Activated CD4-positive, alpha-beta memory T cell treated with anti-CD3 and anti-CD28 coated beads for 36 hours (primary cell): ENCODE measurements at regions of chr12 and their contacts with region 1.

Region 1: DNA sequence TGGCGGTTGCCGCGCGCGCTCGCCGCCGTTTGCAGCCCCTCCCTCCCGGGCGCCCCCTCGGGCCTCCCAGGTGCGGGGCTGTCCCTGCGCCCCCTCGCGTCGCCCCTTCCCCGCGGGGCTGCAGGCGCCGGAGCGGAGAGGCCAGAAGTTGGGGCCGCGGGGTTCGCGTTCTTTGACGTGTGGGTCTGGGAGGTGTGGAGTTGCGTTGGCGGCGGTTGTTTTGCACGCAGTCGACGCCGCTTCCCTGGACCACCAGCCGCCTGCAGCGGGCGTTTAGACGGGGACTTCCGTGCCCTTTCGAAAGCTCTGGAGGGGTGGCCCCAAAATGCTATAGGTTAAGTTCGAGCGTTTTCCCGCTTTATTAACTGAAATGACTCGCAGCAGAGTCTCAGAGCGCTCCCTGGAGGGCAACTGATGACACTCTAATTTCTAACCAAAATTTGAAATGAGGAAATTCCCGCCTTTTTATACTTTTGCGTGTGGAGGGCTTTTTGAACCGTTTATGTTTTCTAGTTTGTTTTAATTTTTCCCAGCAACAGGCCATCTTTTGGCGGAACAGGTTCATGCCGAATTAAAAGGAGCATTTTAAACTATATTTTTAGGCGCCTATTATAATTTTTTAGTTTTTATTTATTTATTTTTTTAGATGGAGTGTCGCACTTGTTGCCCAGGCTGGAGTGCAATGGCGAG is 939 bp downstream of the TMPO start:
- DNase-seq: peak; percentile 94
- H3K4me3 Mint-ChIP-seq: peak overlapping the region; percentile 96
- H3K27ac Mint-ChIP-seq: peak overlapping the region; percentile 99
- H3K4me1 Mint-ChIP-seq: peaks cover 26% of the 10 kb centered on the region
- H3K27me3 Mint-ChIP-seq: peaks cover 1% of the 10 kb centered on the region

Region 2: GRCh38 chr12:96906849-96907670 is 1609.3 kb before region 1 on chr12 and contains the start of gene NEDD1:
- CTCF ChIA-PET with region 1: no interaction called
- POLR2A ChIA-PET with region 1: no interaction called
- intact Hi-C with region 1: loop called (anchors 5 kb)
- DNase-seq: peak; percentile 87
- H3K4me3 Mint-ChIP-seq: peak within 1 kb of the TSS; percentile 93
- H3K27ac Mint-ChIP-seq: peak within 1 kb of the TSS; percentile 96
- H3K4me1 Mint-ChIP-seq: peaks cover 39% of the 10 kb centered on the region
- H3K27me3 Mint-ChIP-seq: no peaks in the 10 kb centered on the region
- total RNA-seq, gene NEDD1: 55.4 to 57.9 TPM

Region 3: GRCh38 chr12:98424726-98425401 is 91.5 kb before region 1 on chr12:
- CTCF ChIA-PET with region 1: interaction called, 7 read pairs
- POLR2A ChIA-PET with region 1: no interaction called
- intact Hi-C with region 1: loop called (anchors 1 kb)
- DNase-seq: peak; percentile 74
- H3K4me3 Mint-ChIP-seq: no peak overlapping the region
- H3K27ac Mint-ChIP-seq: no peak overlapping the region
- H3K4me1 Mint-ChIP-seq: peaks cover 3% of the 10 kb centered on the region
- H3K27me3 Mint-ChIP-seq: no peaks in the 10 kb centered on the region

Region 4: GRCh38 chr12:98503592-98504367 is 12.5 kb before region 1 on chr12:
- CTCF ChIA-PET with region 1: interaction called, 9 read pairs
- POLR2A ChIA-PET with region 1: interaction called, 39 read pairs
- intact Hi-C with region 1: loop called (anchors 1 kb)
- DNase-seq: peak; percentile 97
- H3K4me3 Mint-ChIP-seq: peak overlapping the region; percentile 86
- H3K27ac Mint-ChIP-seq: peak overlapping the region; percentile 99
- H3K4me1 Mint-ChIP-seq: peaks cover 39% of the 10 kb centered on the region
- H3K27me3 Mint-ChIP-seq: peaks cover 9% of the 10 kb centered on the region

Region 5: DNA sequence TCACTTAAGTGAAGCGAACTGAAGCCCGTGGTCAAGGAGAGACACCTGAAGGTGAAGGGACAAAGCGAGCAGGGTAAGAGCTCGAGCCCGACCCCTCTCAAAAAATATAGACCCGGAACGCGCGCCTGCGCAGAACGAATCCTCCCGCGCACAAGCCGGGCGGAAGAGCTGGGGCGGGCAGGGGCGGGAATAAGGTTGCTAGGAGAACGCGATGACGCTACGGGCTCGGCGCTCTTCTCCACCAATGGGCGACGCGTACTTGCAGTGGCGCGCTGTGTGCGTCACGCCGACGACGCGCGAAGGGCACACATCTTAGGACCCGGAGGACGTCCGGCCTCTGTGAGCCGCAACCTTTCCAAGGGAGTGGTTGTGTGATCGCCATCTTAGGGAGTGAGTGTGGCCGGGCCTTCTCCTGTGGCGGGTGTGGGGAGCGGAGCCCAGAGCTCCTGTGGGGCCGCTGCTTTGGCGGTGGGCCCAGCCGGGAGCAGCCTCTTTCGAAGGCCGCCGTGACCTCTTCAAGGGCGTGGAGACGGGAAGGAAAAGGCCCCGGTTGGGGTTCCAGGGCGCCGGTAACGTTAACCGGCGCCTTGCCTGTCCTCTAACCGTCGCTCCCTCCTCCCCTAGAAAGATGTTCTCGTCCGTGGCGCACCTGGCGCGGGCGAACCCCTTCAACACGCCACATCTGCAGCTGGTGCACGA is 77.2 kb after region 1 on chr12 and contains the start of gene SLC25A3:
- CTCF ChIA-PET with region 1: interaction called, 4 read pairs
- POLR2A ChIA-PET with region 1: interaction called, 28 read pairs
- intact Hi-C with region 1: loop called (anchors 1 kb)
- DNase-seq: peak; percentile 96
- H3K4me3 Mint-ChIP-seq: peak within 1 kb of the TSS; percentile 91
- H3K27ac Mint-ChIP-seq: peak within 1 kb of the TSS; percentile 97
- H3K4me1 Mint-ChIP-seq: peaks cover 29% of the 10 kb centered on the region
- H3K27me3 Mint-ChIP-seq: no peaks in the 10 kb centered on the region
- total RNA-seq, gene SLC25A3: 584 to 620 TPM

Region 6: DNA sequence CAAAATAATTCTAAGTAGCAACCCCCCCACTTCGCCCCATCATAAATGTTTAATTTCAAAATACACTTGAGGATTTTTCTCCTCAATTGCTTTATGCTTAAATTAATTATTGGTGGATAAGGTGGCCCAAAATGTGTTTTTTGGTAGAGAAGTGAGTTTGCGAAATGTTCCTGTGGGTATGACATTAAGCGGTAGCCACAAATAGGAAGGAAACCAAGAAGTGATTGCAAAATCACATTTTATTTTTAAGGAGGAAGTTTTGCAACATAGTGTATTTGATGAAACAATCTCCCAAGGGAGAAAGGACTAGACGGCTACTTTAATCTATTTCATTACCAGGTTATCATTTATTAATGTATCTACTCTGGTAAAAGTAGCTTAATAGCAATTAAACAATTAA is 102.6 kb after region 1 on chr12:
- CTCF ChIA-PET with region 1: no interaction called
- POLR2A ChIA-PET with region 1: no interaction called
- intact Hi-C with region 1: no loop called
- DNase-seq: no peak
- H3K4me3 Mint-ChIP-seq: no peak overlapping the region
- H3K27ac Mint-ChIP-seq: no peak overlapping the region
- H3K4me1 Mint-ChIP-seq: no peaks in the 10 kb centered on the region
- H3K27me3 Mint-ChIP-seq: no peaks in the 10 kb centered on the region

Region 7: GRCh38 chr12:98653866-98654493 is 137.7 kb after region 1 on chr12:
- CTCF ChIA-PET with region 1: interaction called, 3 read pairs
- POLR2A ChIA-PET with region 1: no interaction called
- intact Hi-C with region 1: loop called (anchors 1 kb)
- DNase-seq: no peak
- H3K4me3 Mint-ChIP-seq: no peak overlapping the region
- H3K27ac Mint-ChIP-seq: no peak overlapping the region
- H3K4me1 Mint-ChIP-seq: peaks cover 14% of the 10 kb centered on the region
- H3K27me3 Mint-ChIP-seq: no peaks in the 10 kb centered on the region

Region 8: DNA sequence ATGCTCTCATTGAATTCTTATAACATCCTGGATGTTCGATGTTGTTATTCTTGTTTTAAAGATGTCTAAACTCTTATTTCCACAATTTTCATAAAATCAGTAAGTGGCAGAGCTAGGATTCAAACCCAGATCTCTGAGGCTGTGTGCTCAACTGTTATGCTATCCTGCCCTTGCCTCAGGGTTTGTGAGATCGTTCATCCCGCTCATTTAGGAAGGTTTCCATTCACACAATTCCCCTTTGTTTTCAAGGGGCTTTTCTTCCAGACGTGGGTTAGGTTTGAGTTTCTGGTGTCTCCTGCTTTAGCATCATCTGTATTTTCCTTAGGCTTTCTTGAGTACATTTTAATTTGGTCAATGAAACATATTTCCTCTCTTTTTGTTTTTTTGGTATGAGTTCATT is 198.1 kb after region 1 on chr12:
- CTCF ChIA-PET with region 1: no interaction called
- POLR2A ChIA-PET with region 1: no interaction called
- intact Hi-C with region 1: no loop called
- DNase-seq: no peak
- H3K4me3 Mint-ChIP-seq: no peak overlapping the region
- H3K27ac Mint-ChIP-seq: no peak overlapping the region
- H3K4me1 Mint-ChIP-seq: no peaks in the 10 kb centered on the region
- H3K27me3 Mint-ChIP-seq: no peaks in the 10 kb centered on the region

Region 9: DNA sequence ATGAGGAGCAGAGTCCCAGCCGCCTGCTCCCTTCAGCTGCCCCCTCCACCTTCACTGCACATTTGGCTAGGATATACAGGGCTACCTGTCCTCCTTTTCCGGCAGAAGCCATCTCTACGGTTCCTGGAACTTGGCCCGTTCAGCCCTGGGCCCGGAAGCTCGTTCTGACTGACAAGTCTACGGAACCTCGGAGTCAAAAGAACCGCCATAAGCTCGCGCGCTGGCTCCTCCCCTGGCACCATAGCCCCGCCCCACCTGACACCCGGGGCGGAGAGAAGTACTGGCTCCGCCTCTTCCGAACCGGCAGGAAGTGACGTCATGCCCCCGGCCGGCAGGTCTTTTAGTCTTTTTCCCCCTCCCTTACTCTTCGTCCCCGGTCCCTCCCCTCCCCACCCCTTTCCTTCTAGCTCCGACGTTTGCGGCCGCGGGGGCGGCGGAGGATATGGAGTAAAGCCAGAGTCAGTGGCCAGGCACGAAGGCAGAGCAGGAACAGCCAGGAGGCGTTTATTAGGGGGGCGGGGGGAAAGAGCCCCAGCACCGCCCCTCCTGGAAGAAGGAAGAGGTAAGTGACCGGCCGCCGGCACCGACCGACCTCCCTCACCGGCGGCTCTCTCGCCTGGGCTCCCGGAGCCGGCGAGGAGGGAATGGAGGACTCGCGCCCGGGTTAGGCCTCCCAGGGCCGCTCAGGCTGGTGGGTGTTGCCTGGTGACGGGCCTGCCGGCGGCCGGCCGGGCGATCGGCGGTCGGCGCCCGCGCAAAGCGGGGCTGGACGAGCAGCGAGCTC is 1750.7 kb after region 1 on chr12 and contains the starts of genes DEPDC4 and SCYL2:
- CTCF ChIA-PET with region 1: no interaction called
- POLR2A ChIA-PET with region 1: no interaction called
- intact Hi-C with region 1: loop called (anchors 2 kb)
- DNase-seq: peak; percentile 95
- H3K4me3 Mint-ChIP-seq: peak within 1 kb of the TSS; percentile 94
- H3K27ac Mint-ChIP-seq: peak within 1 kb of the TSS; percentile 96
- H3K4me1 Mint-ChIP-seq: peaks cover 24% of the 10 kb centered on the region
- H3K27me3 Mint-ChIP-seq: no peaks in the 10 kb centered on the region
- total RNA-seq, gene DEPDC4: 2.4 to 3.5 TPM
- total RNA-seq, gene SCYL2: 24.5 to 26.7 TPM